ENCODE measurements at regions of chr19 and their contacts with region 1.

Region 1: DNA sequence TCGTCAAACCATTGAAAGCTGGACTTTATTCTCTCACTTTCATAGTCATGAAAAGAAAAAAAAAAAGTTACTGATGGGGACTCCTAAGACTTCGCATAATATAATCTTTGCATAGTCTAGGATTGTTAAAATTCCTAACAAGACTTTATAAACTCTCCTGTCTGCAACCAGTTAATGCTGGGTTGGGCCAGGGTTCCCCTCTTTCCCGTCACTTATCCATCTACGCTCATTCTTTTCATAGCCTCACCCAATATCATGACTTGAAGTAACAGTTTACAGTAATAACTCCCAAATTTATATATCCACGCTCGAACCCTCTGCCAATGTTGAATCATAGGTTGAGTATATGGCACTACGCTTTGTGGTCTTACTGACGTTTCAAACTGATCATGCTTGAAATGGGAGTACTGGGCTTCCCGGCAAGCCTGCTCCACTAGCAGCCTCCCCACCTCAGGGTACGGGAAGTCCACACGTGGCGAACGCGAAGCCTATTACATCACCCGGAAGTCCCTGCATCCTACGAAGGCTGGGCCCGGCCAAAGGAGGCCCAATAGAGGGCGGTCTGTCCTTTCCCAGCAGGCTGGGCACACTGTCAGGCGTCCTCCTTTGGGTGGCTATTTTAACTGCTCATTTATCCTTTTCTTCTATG is 743 bp upstream of the ZNF460 start:
- DNase-seq: peak; percentile 95
- ATAC-seq: peak; percentile 99
- H3K4me3 ChIP-seq: peak overlapping the region; percentile 54 to 86
- H3K27ac ChIP-seq: peak overlapping the region; percentile 78 to 97
- H3K4me1 ChIP-seq: peaks cover 0 to 5% of the 10 kb centered on the region in 2 donors
- H3K27me3 ChIP-seq: no peaks in the 10 kb centered on the region

Region 2: GRCh38 chr19:57088133-57088532 is 191.4 kb before region 1 on chr19:
- intact Hi-C with region 1: no loop called
- DNase-seq: no peak
- ATAC-seq: no peak
- H3K4me3 ChIP-seq: no peak overlapping the region
- H3K27ac ChIP-seq: no peak overlapping the region
- H3K4me1 ChIP-seq: no peaks in the 10 kb centered on the region
- H3K27me3 ChIP-seq: peaks cover 2 to 3% of the 10 kb centered on the region in 2 donors

Region 3: GRCh38 chr19:57240311-57241090 is 39.0 kb before region 1 on chr19 and contains the start of gene ZNF805:
- intact Hi-C with region 1: loop called in 1 of 2 experiments (anchors 5 kb)
- DNase-seq: peak; percentile 97 to 98
- ATAC-seq: peak; percentile 98
- H3K4me3 ChIP-seq: peak within 1 kb of the TSS; percentile 64 to 98
- H3K27ac ChIP-seq: peak within 1 kb of the TSS; percentile 24 to 72
- H3K4me1 ChIP-seq: peaks cover 4 to 6% of the 10 kb centered on the region in 2 donors
- H3K27me3 ChIP-seq: no peaks in the 10 kb centered on the region
- total RNA-seq, gene ZNF805: 19.0 to 19.8 TPM

Region 4: GRCh38 chr19:57308514-57308913 is 29.0 kb after region 1 on chr19:
- intact Hi-C with region 1: no loop called
- DNase-seq: no peak
- ATAC-seq: no peak
- H3K4me3 ChIP-seq: no peak overlapping the region
- H3K27ac ChIP-seq: no peak overlapping the region
- H3K4me1 ChIP-seq: no peaks in the 10 kb centered on the region
- H3K27me3 ChIP-seq: no peaks in the 10 kb centered on the region

Region 5: DNA sequence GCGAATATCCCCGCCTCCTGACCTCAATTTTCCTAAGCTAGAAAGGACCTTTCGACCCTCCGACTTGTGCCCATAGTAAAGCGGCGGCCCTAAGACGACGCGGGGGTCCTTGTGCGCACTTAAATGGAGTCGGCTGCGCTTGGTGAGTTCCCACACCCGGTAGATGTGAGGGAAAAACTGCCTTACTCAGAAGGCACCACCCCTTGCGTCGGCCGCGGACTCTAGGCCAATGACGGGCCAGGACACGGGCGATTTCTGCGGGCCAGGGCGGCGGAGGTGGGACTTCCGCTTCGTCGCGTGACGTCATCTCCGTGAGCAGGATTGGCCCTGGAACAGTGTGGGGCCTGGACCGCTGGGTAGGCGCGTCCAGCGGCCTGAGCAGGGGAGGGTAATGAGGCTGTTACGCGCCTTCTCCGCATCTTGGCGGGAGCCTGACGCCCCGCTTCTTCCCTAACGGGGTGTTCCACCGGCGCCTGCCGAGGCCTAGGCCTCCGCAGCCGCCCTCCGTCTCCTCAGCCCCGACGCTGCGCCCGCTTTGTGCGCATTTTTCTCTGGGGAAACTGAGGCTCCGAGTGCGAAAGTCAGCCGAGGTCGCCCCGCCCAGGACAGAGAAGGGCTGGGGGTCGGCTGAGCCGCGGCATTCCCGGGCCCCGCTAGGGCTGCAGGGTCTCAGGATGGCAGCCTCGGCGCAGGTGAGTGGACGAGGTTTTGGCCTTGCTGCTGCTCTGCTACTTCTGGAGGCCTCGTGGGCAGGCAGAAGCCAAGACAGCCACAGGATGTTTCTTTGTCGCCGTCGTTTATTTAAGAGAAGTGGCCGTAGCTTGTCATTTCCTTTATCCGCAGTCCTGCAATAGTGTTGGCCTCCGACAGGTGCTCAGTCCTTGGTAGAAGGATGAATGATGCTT is 40.9 kb after region 1 on chr19 and contains the start of gene ZNF543:
- intact Hi-C with region 1: loop called in 1 of 2 experiments (anchors 5 kb)
- DNase-seq: peak; percentile 98 to 99
- ATAC-seq: peak; percentile 99
- H3K4me3 ChIP-seq: peak within 1 kb of the TSS; percentile 57 to 69
- H3K27ac ChIP-seq: peak within 1 kb of the TSS in 1 of 2 donors; percentile 66
- H3K4me1 ChIP-seq: no peaks in the 10 kb centered on the region
- H3K27me3 ChIP-seq: no peaks in the 10 kb centered on the region
- total RNA-seq, gene ZNF543: 8.2 to 8.9 TPM

Region 6: GRCh38 chr19:57350877-57351805 is 71.6 kb after region 1 on chr19 and contains the start of gene ZNF304:
- intact Hi-C with region 1: loop called (anchors 1 to 2 kb)
- DNase-seq: peak; percentile 96 to 97
- ATAC-seq: peak; percentile 95
- H3K4me3 ChIP-seq: peak within 1 kb of the TSS; percentile 83 to 89
- H3K27ac ChIP-seq: peak within 1 kb of the TSS in 1 of 2 donors; percentile 53
- H3K4me1 ChIP-seq: no peaks in the 10 kb centered on the region
- H3K27me3 ChIP-seq: no peaks in the 10 kb centered on the region
- total RNA-seq, gene ZNF304: 9.7 to 11.0 TPM

Measured in aorta (tissue), 5 donors.